Right lobe of liver (tissue), 6 donors: ENCODE measurements at regions of chr19 and their contacts with region 1.

Region 1: GRCh38 chr19:4738734-4739133 is 15.1 kb upstream of the DPP9 start:
- DNase-seq: no peak
- ATAC-seq: no peak
- H3K4me3 ChIP-seq: no peak overlapping the region
- H3K27ac ChIP-seq: no peak overlapping the region
- H3K4me1 ChIP-seq: no peaks in the 10 kb centered on the region
- H3K27me3 ChIP-seq: no peaks in the 10 kb centered on the region
- CTCF ChIP-seq: no peak
- POLR2A ChIP-seq: no peak

Region 2: DNA sequence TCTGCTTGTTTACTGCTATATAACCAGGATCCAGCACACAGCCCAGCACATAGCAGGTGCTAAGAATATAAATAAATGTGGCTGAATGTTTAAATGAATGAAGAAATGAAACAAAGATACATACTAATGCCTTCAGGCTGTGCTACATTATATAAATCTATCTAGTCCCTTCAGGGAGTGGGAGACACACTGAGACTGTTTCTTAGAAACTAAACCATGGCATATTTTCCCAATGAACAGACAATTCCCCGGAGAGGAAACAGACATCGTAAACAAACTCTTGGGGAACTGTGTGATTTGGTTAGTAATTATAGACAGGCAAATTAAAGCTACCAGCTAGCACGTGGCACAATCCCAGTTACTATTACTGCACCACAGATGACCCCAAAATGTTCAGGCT is 43.1 kb after region 1 on chr19:
- intact Hi-C with region 1: loop called (anchors 5 kb)
- DNase-seq: no peak
- ATAC-seq: no peak
- H3K4me3 ChIP-seq: no peak overlapping the region
- H3K27ac ChIP-seq: no peak overlapping the region
- H3K4me1 ChIP-seq: no peaks in the 10 kb centered on the region
- H3K27me3 ChIP-seq: no peaks in the 10 kb centered on the region
- CTCF ChIP-seq: no peak
- POLR2A ChIP-seq: no peak

Region 3: DNA sequence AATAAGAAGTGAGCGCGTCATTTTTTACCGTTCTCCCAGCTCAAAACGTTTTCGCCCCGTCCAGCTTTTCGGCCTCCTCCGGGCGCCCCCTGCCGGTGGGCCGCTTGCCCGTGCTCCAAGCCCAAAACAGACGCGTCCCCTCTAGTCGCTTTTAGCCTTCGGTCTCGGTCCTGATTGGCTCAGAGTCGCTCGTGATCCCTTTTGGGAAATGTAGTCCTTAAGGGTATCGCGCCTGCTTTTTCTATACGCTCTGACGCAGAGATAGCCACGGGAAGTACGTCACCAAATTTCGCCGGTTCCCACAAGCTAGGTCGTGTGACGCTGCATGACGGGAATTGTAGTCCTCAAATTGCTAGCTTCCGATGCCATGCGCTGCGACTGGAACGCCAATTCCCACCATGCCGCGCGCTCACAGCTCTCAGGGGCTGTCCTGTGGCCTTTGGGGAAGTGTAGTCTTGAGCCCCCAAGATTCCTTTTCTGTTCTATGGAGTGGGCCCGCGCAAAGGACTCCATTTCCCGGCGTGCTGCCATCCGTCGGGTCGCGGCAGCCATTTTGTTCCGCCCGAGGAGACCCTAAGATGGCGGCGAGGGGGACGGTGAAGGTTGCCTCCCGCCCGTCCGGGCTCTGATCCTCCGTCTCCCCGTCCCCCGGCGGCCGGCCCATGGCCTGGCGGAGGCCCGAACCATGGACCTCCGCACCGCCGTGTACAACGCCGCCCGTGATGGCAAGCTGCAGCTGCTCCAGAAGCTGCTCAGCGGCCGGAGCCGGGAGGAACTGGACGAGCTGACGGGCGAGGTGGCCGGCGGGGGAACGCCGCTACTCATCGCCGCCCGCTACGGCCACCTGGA is 52.7 kb after region 1 on chr19 and contains the start of gene FEM1A:
- intact Hi-C with region 1: loop called in 1 of 2 experiments (anchors 5 kb)
- DNase-seq: peak; percentile 99 to 100 (median 100)
- ATAC-seq: peak; percentile 97 to 99 (median 98)
- H3K4me3 ChIP-seq: peak within 1 kb of the TSS; percentile 75 to 94 (median 80)
- H3K27ac ChIP-seq: peak within 1 kb of the TSS; percentile 56 to 83 (median 81)
- H3K4me1 ChIP-seq: peaks cover 0 to 24% (median 11%) of the 10 kb centered on the region in 4 donors
- H3K27me3 ChIP-seq: no peaks in the 10 kb centered on the region
- CTCF ChIP-seq: peak; percentile 98 to 100 (median 100)
- POLR2A ChIP-seq: peak; percentile 67
- total RNA-seq, gene FEM1A: 4.7 to 11.9 (median 5.6) TPM